ENCODE measurements at regions of chr1 and their contacts with region 1.

Region 1: GRCh38 chr1:31663622-31664452 is 19.2 kb upstream of the PEF1 start:
- DNase-seq: peak; percentile 78
- ATAC-seq: peak; percentile 60

Region 2: GRCh38 chr1:31617917-31618660 is 45.7 kb before region 1 on chr1:
- intact Hi-C with region 1: no loop called
- DNase-seq: peak; percentile 66
- ATAC-seq: peak; percentile 63

Region 3: GRCh38 chr1:31789259-31790065 is 125.6 kb after region 1 on chr1:
- intact Hi-C with region 1: loop called (anchors 10 kb)
- DNase-seq: peak; percentile 97
- ATAC-seq: peak; percentile 94

Region 4: GRCh38 chr1:33007190-33008050 is 1343.6 kb after region 1 on chr1:
- intact Hi-C with region 1: no loop called
- DNase-seq: no peak
- ATAC-seq: peak; percentile 57

Measured in left ventricle myocardium superior (tissue), 1 donor.